T-cell (primary cell): ENCODE measurements at regions of chr14 and their contacts with region 1.

Region 1: DNA sequence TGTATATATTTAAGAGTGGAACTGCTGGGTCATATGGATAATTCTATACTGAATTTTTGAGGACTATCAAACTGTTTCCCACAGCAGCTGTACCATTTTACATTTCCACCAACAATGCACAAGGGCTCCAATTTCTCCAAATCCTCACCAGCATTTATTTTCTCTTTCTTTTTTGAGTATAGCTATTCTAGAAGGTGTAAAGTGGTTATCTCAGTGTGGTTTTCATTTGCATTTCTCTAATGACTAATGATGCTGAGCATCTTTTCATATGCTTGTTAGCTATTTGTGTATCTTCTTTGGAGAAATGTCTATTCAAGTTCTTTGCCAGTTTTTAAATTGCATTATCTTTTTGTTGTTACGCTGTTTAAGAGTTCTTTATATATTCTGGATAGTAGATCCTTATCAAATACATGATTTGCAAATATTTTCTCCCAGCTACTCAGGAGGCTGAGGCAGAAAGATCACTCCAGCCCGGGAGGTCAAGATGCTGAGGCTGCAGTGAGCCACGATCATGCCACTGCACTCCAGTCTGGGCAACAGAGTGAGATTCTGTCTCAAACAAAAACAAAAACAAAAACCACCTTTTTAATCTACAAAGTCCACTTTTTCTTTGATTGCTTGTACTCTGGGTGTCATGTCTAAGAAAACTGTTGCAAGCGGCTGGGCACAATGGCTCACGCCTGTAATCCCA is 32.8 kb downstream of the GTF2A1 start:
- DNase-seq: no peak
- ATAC-seq: no peak
- H3K4me3 ChIP-seq: no peak overlapping the region
- H3K4me3 Mint-ChIP-seq: no peak overlapping the region
- H3K27ac ChIP-seq: no peak overlapping the region
- H3K27ac Mint-ChIP-seq: peak overlapping the region in 1 of 2 donors; percentile 58
- H3K4me1 ChIP-seq: peaks cover 4 to 27% of the 10 kb centered on the region in 2 experiments
- H3K4me1 Mint-ChIP-seq: peaks cover 48 to 58% (median 53%) of the 10 kb centered on the region in 3 donors
- H3K27me3 ChIP-seq: no peaks in the 10 kb centered on the region
- H3K27me3 Mint-ChIP-seq: no peaks in the 10 kb centered on the region

Region 2: DNA sequence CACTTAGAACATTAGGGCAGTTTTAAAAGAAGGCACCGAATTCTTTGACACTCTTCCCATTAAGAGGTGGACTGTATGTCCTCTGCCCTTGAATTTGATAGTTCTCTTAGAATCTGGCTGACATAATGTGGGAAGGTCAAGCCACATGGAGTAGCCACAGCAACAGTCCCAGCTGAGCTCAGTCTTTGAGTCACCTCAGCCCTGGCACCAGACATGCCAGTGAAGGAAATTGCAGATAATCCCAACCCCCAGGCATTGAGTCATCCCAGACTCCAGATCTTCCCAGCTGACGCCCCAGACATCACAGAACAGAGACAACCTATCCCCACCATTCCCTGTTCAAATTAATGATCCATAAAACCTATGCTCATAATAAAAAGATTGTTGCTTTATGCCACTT is 50.7 kb before region 1 on chr14:
- CTCF ChIA-PET with region 1: no interaction called
- POLR2A ChIA-PET with region 1: no interaction called
- DNase-seq: no peak
- ATAC-seq: no peak
- H3K4me3 ChIP-seq: no peak overlapping the region
- H3K4me3 Mint-ChIP-seq: no peak overlapping the region
- H3K27ac ChIP-seq: no peak overlapping the region
- H3K27ac Mint-ChIP-seq: no peak overlapping the region
- H3K4me1 ChIP-seq: no peaks in the 10 kb centered on the region
- H3K4me1 Mint-ChIP-seq: no peaks in the 10 kb centered on the region
- H3K27me3 ChIP-seq: no peaks in the 10 kb centered on the region
- H3K27me3 Mint-ChIP-seq: peaks cover 0 to 2% of the 10 kb centered on the region in 2 donors

Region 3: DNA sequence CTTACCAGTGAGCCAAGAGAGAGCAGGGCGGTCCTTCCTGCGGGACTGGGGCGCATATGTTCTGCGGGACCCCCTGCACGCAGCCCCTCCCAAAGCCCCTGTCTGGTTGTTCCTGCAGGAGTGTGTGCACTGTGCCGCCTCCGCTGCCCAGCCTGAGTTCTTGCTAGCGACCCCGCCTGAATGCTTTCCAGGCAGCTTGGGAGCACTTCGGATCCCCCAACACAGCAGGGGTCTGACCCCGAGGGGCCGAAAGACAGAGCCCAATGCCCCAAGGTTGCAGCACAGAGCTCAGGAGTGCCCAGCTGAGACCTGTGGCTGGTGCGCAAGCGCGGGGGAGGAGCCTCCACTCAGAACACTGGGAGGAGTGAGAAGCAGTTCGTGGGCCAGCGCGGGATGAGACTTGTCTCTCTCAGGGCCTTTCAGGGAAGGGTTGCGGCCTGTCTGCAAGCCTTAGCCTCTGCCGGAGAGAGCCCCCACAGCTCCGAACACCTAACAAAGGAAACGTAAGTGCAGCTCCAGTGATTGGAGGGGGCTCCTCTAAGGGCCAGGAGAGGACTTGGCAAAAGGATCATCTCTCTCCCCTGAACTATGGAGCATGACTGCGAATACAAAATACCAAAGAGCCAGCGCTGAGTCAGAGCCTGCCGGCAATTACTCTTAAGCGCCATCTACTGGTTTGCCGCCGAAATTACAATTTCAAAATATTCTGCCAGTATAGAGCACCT is 17.7 kb before region 1 on chr14:
- CTCF ChIA-PET with region 1: interaction called in 1 of 2 experiments, 10 read pairs
- POLR2A ChIA-PET with region 1: no interaction called
- DNase-seq: peak; percentile 76 to 92 (median 85)
- ATAC-seq: peak; percentile 98 to 99 (median 98)
- H3K4me3 ChIP-seq: peak overlapping the region; percentile 74 to 85
- H3K4me3 Mint-ChIP-seq: peak overlapping the region; percentile 85 to 89 (median 88)
- H3K27ac ChIP-seq: peak overlapping the region; percentile 80
- H3K27ac Mint-ChIP-seq: peak overlapping the region; percentile 93 to 97
- H3K4me1 ChIP-seq: peaks cover 8 to 17% of the 10 kb centered on the region in 2 experiments
- H3K4me1 Mint-ChIP-seq: peaks cover 20 to 27% (median 24%) of the 10 kb centered on the region in 3 donors
- H3K27me3 ChIP-seq: no peaks in the 10 kb centered on the region
- H3K27me3 Mint-ChIP-seq: no peaks in the 10 kb centered on the region

Region 4: GRCh38 chr14:81231540-81231939 is 43.6 kb after region 1 on chr14:
- CTCF ChIA-PET with region 1: no interaction called
- POLR2A ChIA-PET with region 1: no interaction called
- DNase-seq: no peak
- ATAC-seq: no peak
- H3K4me3 ChIP-seq: no peak overlapping the region
- H3K4me3 Mint-ChIP-seq: no peak overlapping the region
- H3K27ac ChIP-seq: no peak overlapping the region
- H3K27ac Mint-ChIP-seq: no peak overlapping the region
- H3K4me1 ChIP-seq: no peaks in the 10 kb centered on the region
- H3K4me1 Mint-ChIP-seq: peaks cover 3 to 6% (median 4%) of the 10 kb centered on the region in 3 donors
- H3K27me3 ChIP-seq: no peaks in the 10 kb centered on the region
- H3K27me3 Mint-ChIP-seq: no peaks in the 10 kb centered on the region

Region 5: DNA sequence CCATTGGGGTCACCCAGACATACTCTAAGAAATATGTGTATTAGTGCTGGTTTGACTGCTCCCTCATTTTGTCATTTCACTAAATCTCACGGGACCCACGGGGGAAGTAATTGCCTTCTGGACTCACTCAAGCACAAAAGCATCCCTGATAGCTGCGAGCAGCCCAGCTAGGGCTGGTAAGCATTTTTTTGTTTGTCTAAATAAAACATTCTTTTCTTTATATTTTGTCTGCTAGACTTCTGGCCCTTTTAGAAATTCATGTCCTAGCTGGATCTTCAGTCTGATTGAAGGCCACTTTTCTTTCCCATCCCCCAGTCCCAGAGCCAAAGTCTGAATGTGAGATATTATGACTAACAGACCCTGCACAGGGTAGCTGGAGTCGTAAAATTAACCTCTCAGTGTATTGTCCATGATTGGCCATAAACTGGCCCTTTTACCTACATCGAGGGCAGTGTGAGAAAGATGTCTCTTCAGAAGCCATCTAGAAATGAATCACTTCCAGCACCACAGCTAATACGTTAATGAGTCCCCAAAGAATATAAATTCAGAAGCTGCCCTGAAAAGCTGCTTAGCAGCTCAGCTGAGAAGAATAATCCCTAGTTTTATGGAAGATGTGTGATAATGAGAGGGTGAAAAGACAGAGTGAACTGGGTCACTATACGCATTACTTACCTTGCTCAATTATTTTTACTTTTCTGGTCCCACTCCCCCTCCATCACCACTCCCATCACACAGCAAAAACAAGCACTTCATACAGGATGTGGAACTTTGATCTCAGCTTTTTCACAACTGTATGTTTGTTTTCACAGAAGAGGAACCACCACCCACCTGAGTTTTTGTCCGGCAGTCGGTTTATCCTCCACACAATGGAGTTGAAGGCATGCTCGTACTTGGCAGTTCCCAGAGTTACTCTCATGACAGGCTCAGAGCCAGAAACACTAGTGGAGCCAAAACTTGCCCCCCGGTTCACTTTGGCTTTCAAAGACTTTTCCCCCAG is 88.4 kb after region 1 on chr14:
- CTCF ChIA-PET with region 1: no interaction called
- POLR2A ChIA-PET with region 1: no interaction called
- DNase-seq: no peak
- ATAC-seq: no peak
- H3K4me3 ChIP-seq: no peak overlapping the region
- H3K4me3 Mint-ChIP-seq: no peak overlapping the region
- H3K27ac ChIP-seq: no peak overlapping the region
- H3K27ac Mint-ChIP-seq: no peak overlapping the region
- H3K4me1 ChIP-seq: no peaks in the 10 kb centered on the region
- H3K4me1 Mint-ChIP-seq: no peaks in the 10 kb centered on the region
- H3K27me3 ChIP-seq: peaks cover 0 to 5% of the 10 kb centered on the region in 2 experiments
- H3K27me3 Mint-ChIP-seq: peaks cover 3 to 15% of the 10 kb centered on the region in 2 donors

Region 6: DNA sequence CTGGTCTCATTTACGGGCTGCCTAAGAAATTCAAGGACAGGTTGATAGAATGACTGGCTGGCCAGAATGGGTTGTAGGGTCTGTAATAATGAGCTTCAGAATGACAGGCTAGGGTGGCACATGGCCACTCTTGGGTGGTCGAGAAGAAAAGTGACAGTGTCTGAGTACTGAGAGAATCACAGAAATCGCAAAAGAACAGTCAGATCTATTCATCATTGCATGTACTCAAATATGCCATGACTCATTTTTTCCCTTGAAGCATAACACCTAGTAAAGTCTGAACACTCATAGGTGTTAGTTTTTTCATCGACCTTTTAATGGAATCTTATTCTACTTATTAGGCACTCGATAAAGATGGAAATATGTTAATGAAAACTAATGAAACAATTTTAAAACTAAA is 383.5 kb after region 1 on chr14:
- CTCF ChIA-PET with region 1: no interaction called
- POLR2A ChIA-PET with region 1: interaction called in 1 of 2 experiments, 11 read pairs
- DNase-seq: no peak
- ATAC-seq: no peak
- H3K4me3 ChIP-seq: no peak overlapping the region
- H3K4me3 Mint-ChIP-seq: no peak overlapping the region
- H3K27ac ChIP-seq: no peak overlapping the region
- H3K27ac Mint-ChIP-seq: no peak overlapping the region
- H3K4me1 ChIP-seq: no peaks in the 10 kb centered on the region
- H3K4me1 Mint-ChIP-seq: no peaks in the 10 kb centered on the region
- H3K27me3 ChIP-seq: peaks cover 0 to 7% of the 10 kb centered on the region in 2 experiments
- H3K27me3 Mint-ChIP-seq: peaks cover 9 to 14% of the 10 kb centered on the region in 2 donors